ENCODE measurements at regions of chr4 and their contacts with region 1.

Region 1: DNA sequence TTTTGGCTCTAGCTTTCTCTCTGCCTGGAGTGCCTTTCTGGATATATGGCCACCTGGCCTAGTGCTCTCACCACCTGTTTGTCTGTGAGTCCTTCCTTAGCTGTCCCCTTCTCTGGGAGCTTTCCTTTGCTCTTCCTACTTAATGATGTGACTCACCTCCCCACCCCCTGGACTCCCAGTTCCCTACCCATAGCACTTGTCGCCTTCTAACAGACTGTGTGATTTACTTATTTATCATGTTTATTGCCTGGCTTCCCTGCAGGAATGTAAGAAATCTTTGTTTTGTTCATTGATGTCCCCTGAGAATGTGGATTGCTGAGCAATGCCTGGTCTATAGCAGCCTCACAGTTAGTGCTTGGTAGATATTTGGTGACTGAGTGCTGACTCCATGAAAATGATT is 18.9 kb downstream of the ADD1 start:
- DNase-seq: no peak
- ATAC-seq: no peak; the same call in 2 of the 3 replicates
- H3K4me3 ChIP-seq: no peak overlapping the region
- H3K27ac ChIP-seq: peak overlapping the region; percentile 34
- H3K4me1 ChIP-seq: peaks cover 98% of the 10 kb centered on the region
- H3K27me3 ChIP-seq: no peaks in the 10 kb centered on the region
- CTCF ChIP-seq: no peak
- EP300 ChIP-seq: no peak
- POLR2A ChIP-seq: no peak
- RAD21 ChIP-seq: no peak

Region 2: DNA sequence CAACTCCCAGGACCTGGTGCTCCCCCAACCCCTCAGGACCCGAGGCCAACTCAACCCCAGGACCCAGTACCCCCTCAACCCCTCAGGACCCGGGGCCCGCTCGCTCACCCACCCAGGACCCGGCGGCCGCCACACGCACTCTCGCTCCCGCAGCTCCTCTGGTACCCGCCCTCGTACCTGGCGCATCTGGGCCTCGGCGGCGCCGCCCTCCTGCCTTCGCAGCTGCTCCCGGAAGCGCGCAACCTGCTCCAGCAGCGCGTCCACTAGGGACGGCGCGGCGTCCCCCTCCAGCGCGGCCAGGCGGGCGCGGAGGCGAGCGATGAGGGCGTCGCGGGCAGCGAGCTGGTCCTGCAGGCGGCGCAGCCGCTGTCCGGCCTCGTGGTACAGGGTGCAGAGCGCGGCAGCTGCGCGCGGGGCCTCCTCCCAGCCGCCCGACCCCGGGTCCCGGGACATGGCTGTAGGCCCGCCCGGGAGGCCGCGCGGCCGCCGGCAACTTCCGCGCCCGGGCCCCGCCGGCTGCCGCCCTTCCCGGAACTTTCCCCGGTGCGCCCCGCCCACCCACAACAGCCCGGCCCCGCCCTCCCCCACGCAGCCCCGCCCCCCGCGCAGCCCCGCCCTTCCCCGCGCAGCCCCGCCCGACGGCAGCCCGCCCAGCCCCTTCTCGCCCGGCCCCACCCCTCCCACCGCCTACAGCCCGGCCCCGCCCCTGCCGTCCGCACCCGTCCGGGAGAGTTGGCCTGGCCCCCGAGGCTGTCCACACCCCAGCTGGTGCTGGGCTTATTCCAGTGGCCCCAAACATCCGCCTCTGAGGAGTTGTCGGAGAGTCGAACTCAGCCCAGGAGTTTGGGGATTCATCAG is 106.5 kb before region 1 on chr4 and contains the start of gene TNIP2:
- CTCF ChIA-PET with region 1: no interaction called
- POLR2A ChIA-PET with region 1: no interaction called
- in situ Hi-C with region 1: no loop called
- intact Hi-C with region 1: loop called (anchors 10 kb)
- DNase-seq: peak; percentile 64
- ATAC-seq: peak; percentile 87
- H3K4me3 ChIP-seq: peak within 1 kb of the TSS; percentile 64 to 88 (median 82)
- H3K27ac ChIP-seq: peak within 1 kb of the TSS; percentile 76
- H3K4me1 ChIP-seq: peaks cover 61% of the 10 kb centered on the region
- H3K27me3 ChIP-seq: no peaks in the 10 kb centered on the region
- CTCF ChIP-seq: peak; percentile 50; the same call in 1 of the 2 replicates
- EP300 ChIP-seq: no peak
- POLR2A ChIP-seq: peak; percentile 71 to 75; a peak in 3 of 4 replicates
- RAD21 ChIP-seq: peak; percentile 95
- total RNA-seq, gene TNIP2: 28.5 and 38.0 TPM in 2 replicates

Region 3: DNA sequence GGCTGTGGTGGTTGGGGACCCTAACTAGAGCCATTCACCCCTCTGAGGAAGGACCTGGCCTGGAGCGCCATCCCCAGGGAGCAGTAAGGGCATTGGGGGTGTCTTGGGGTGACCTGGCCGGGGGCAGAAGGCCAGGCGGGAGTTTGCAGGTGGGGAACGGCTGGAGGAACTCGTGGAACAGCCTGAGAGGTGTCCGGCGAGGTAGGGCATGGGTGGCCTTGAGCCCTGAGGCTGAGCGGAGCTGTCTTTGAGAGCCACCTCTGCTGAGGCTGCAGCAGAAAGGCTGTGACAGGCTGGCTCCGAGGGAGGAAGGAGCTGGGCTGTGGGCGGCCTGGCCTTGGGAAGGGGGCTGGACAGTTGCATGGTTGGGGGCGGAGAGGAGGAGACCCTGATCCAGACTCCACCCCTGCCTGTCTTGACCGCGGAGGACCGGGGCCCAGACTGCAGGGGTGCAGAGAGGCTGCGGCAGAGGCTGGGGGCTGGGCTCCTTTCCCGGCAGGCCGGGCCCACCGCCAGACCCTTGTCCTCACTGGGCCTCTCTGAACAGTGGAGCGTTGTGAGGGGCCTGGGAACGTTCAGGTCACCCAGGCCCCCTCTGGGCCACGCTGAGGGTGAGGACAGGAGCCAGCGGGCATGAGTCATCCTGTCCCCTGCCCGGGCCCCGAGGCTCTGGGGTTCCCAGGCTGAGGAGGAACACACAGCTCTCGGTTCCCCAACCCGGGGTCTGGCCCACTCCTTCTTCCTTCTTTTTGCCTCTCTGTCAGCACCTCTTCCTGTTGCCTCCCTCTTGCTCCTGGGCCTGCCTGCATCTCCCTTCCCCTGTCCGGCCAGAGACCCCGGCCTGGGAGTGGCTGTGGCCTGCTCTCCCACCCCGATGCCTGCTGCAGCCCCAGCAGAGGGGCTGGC is 61.6 kb before region 1 on chr4:
- CTCF ChIA-PET with region 1: no interaction called
- POLR2A ChIA-PET with region 1: interaction called, 3 read pairs
- in situ Hi-C with region 1: no loop called
- intact Hi-C with region 1: loop called (anchors 5 kb)
- DNase-seq: peak; percentile 92
- ATAC-seq: peak; percentile 89
- H3K4me3 ChIP-seq: peak overlapping the region; percentile 56 to 79 (median 66)
- H3K27ac ChIP-seq: peak overlapping the region; percentile 83
- H3K4me1 ChIP-seq: peaks cover 61% of the 10 kb centered on the region
- H3K27me3 ChIP-seq: no peaks in the 10 kb centered on the region
- CTCF ChIP-seq: no peak
- EP300 ChIP-seq: peak; percentile 45 to 69; a peak in 3 of 4 replicates
- POLR2A ChIP-seq: peak in 1 of 2 experiments; percentile 67; a peak in 2 of 4 replicates
- RAD21 ChIP-seq: 0 out of 2 replicates have a peak, but pooled peaks have one; percentile 26

Region 4: DNA sequence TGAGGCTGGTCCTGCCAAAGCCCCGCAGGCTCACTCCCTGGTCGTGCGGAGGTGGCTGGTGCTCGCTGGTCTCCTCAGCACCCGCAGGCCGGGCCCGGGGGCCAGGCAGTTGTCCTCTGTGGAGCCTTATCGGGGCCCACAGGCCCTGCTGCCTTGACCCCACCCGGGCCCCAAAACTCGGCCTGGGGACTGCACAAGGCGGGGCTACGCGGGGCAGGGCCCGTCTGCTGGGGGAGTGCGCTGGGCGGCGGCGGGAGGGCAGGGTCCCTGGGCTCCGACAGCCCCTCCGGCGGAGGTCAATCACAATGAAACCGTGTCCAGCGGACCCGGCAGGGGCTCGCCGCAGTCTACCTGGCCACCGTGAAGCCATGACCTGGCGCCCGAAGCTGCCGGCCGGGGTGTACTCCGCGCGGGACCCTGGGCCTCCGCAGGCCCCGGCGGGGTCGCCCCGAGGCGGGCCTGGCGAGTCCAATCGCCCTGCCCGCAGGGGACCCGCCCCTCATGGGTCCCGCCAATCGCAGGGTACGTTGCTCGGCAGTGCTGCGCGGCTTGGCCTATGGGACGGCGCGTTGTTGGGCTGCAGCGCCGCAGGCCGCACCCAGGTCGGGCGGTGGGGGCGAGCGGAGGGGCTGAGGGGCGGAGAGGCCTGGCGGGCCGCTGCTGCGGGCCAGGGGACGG is 19.1 kb before region 1 on chr4 and contains the start of gene ADD1:
- CTCF ChIA-PET with region 1: no interaction called
- POLR2A ChIA-PET with region 1: interaction called, 7 read pairs
- in situ Hi-C with region 1: no loop called
- intact Hi-C with region 1: loop called (anchors 2 kb)
- DNase-seq: peak; percentile 81
- ATAC-seq: peak; percentile 95
- H3K4me3 ChIP-seq: peak within 1 kb of the TSS; percentile 86 to 99 (median 87)
- H3K27ac ChIP-seq: peak within 1 kb of the TSS; percentile 72
- H3K4me1 ChIP-seq: peaks cover 46% of the 10 kb centered on the region
- H3K27me3 ChIP-seq: no peaks in the 10 kb centered on the region; a peak in 1 of 5 replicates
- CTCF ChIP-seq: no peak
- EP300 ChIP-seq: 0 out of 4 replicates have a peak, but pooled peaks of 1 of the 2 experiments have one; percentile 23
- POLR2A ChIP-seq: peak; percentile 76 to 86
- RAD21 ChIP-seq: peak; percentile 49
- total RNA-seq, gene ADD1: 122 and 133 TPM in 2 replicates

Region 5: GRCh38 chr4:2898001-2898400 is 35.5 kb after region 1 on chr4:
- CTCF ChIA-PET with region 1: no interaction called
- POLR2A ChIA-PET with region 1: no interaction called
- in situ Hi-C with region 1: no loop called
- intact Hi-C with region 1: no loop called
- DNase-seq: no peak
- ATAC-seq: no peak
- H3K4me3 ChIP-seq: no peak overlapping the region
- H3K27ac ChIP-seq: no peak overlapping the region
- H3K4me1 ChIP-seq: no peaks in the 10 kb centered on the region
- H3K27me3 ChIP-seq: no peaks in the 10 kb centered on the region
- CTCF ChIP-seq: no peak
- EP300 ChIP-seq: no peak
- POLR2A ChIP-seq: no peak
- RAD21 ChIP-seq: no peak

Region 6: DNA sequence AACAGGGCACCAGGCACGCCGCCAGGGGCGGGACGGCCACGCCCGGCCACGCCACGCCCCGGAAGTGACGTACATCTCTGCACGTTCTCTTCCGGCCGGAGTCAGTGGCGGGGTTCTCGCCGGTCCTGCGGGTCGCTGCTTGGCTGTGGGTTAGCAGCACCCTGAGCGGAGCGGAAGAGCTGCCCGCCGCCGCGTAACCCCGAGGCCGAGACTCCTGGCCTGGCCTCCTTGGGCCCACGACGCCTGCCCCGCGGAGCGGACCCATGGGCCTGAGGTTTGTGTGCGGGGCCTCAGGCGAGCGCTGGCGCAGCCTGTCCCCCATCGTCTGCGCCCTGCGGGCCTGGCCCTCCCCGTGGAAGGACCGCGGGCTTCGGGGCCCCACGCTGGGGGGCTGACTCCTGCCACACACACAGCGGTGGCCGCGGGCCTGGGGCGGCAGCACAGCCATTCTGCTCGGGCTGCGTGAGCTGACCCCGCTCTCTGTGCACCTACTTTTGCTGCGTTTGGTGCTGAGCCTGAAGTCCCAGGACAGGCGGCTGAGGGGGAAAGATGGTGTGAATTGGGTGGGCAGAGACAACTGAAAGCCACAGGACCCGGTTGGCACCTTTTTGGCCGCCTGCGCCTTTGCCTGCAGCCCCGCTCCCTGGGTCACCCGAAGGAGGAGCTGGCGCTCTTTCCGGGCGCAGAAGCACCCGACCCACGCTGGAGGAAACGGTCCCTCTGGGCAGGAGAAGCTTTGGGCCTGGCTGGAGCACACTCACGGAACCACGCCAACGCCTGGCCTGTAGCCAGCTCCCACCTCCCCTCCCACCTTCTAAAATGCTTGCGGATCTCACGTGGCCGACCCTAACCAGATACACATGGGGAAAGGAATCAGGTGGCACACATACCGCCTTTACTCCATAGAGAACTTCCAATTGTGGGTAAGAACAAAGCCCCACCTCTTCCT is 72.6 kb after region 1 on chr4:
- CTCF ChIA-PET with region 1: no interaction called
- POLR2A ChIA-PET with region 1: no interaction called
- in situ Hi-C with region 1: no loop called
- intact Hi-C with region 1: loop called (anchors 10 kb)
- DNase-seq: peak; percentile 69
- ATAC-seq: peak; percentile 62
- H3K4me3 ChIP-seq: peak overlapping the region; percentile 97 to 98 (median 98)
- H3K27ac ChIP-seq: peak overlapping the region; percentile 67
- H3K4me1 ChIP-seq: peaks cover 43% of the 10 kb centered on the region
- H3K27me3 ChIP-seq: no peaks in the 10 kb centered on the region; a peak in 1 of 5 replicates
- CTCF ChIP-seq: peak; percentile 17; the same call in 1 of the 2 replicates
- EP300 ChIP-seq: no peak
- POLR2A ChIP-seq: peak in 1 of 2 experiments; percentile 79; a peak in 2 of 4 replicates
- RAD21 ChIP-seq: no peak